Naive thymus-derived CD4-positive, alpha-beta T cell (primary cell): ENCODE measurements at regions of chr9 and their contacts with region 1.

Region 1: GRCh38 chr9:4762108-4762885 is 21.3 kb upstream of the AK3 start:
- DNase-seq: peak; percentile 56 to 83 (median 76)
- ATAC-seq: peak; percentile 79
- H3K4me3 ChIP-seq: no peak overlapping the region
- H3K4me3 Mint-ChIP-seq: peak overlapping the region; percentile 39 to 79 (median 64)
- H3K27ac ChIP-seq: no peak overlapping the region
- H3K27ac Mint-ChIP-seq: peak overlapping the region in 5 of 9 donors; percentile 29 to 83 (median 51)
- H3K4me1 ChIP-seq: peaks cover 0 to 3% of the 10 kb centered on the region in 2 donors
- H3K4me1 Mint-ChIP-seq: peaks cover 0 to 20% (median 10%) of the 10 kb centered on the region in 7 donors
- H3K27me3 ChIP-seq: no peaks in the 10 kb centered on the region
- H3K27me3 Mint-ChIP-seq: peaks cover 0 to 11% (median 7%) of the 10 kb centered on the region in 5 donors

Region 2: DNA sequence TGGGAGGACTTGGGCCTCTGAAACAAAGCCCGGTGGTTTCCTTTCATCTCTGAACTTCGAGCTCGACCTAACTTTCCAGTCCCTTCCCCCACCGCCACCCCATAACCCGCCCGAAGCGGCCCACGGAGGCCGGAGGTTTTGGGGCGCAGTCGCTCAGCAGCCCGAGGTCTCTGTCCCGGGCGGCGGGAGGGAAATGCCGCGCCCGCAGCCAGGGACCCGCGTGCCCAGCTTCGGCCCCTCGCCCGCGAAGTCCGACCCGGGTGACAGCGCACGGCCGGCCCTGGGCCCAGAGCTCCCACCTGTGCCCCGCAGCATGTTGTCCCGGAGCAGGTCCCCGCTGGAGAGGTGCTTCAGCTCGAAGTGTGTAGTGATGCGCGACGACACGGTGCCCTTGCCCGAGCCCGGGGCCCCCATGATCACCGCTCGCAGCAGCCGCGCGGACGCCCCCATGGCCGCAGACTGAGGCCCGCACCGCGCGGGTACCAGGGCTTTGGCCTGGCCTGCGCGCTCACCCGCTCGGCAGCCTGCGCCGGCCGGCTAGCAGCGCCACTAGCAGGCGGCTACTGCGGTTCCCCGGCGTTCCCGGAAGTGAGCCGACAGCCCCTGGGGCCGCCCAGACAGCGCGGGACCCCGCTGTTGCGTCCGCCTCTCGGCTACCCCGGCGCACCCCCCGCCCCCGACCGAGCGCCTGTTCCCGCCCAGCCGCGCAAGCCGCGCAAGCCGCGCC is 21.5 kb before region 1 on chr9 and contains the start of gene AK3:
- CTCF ChIA-PET with region 1: interaction called, 5 read pairs
- POLR2A ChIA-PET with region 1: interaction called, 3 read pairs
- intact Hi-C with region 1: loop called in 1 of 2 experiments (anchors 2 kb)
- DNase-seq: peak; percentile 72 to 85 (median 83)
- ATAC-seq: peak; percentile 95
- H3K4me3 ChIP-seq: peak within 1 kb of the TSS; percentile 73
- H3K4me3 Mint-ChIP-seq: peak within 1 kb of the TSS; percentile 88 to 99 (median 94)
- H3K27ac ChIP-seq: peak within 1 kb of the TSS; percentile 86
- H3K27ac Mint-ChIP-seq: peak within 1 kb of the TSS; percentile 86 to 98 (median 93)
- H3K4me1 ChIP-seq: peaks cover 10 to 16% of the 10 kb centered on the region in 2 donors
- H3K4me1 Mint-ChIP-seq: peaks cover 22 to 49% (median 40%) of the 10 kb centered on the region in 7 donors
- H3K27me3 ChIP-seq: no peaks in the 10 kb centered on the region
- H3K27me3 Mint-ChIP-seq: no peaks in the 10 kb centered on the region
- total RNA-seq, gene AK3: 18.0 to 34.8 (median 25.8) TPM

Region 3: GRCh38 chr9:4862506-4863250 is 100.4 kb after region 1 on chr9:
- CTCF ChIA-PET with region 1: no interaction called
- POLR2A ChIA-PET with region 1: no interaction called
- intact Hi-C with region 1: loop called in 1 of 2 experiments (anchors 1 kb)
- DNase-seq: no peak
- ATAC-seq: no peak
- H3K4me3 ChIP-seq: no peak overlapping the region
- H3K4me3 Mint-ChIP-seq: no peak overlapping the region
- H3K27ac ChIP-seq: no peak overlapping the region
- H3K27ac Mint-ChIP-seq: no peak overlapping the region
- H3K4me1 ChIP-seq: no peaks in the 10 kb centered on the region
- H3K4me1 Mint-ChIP-seq: peaks cover 0 to 33% (median 2%) of the 10 kb centered on the region in 7 donors
- H3K27me3 ChIP-seq: no peaks in the 10 kb centered on the region
- H3K27me3 Mint-ChIP-seq: no peaks in the 10 kb centered on the region

Region 4: GRCh38 chr9:5052838-5053237 is 290.5 kb after region 1 on chr9:
- CTCF ChIA-PET with region 1: no interaction called
- POLR2A ChIA-PET with region 1: no interaction called
- intact Hi-C with region 1: loop called in 1 of 2 experiments (anchors 10 kb)
- DNase-seq: no peak
- ATAC-seq: no peak
- H3K4me3 ChIP-seq: no peak overlapping the region
- H3K4me3 Mint-ChIP-seq: no peak overlapping the region
- H3K27ac ChIP-seq: no peak overlapping the region
- H3K27ac Mint-ChIP-seq: no peak overlapping the region
- H3K4me1 ChIP-seq: no peaks in the 10 kb centered on the region
- H3K4me1 Mint-ChIP-seq: peaks cover 0 to 28% (median 0%) of the 10 kb centered on the region in 7 donors
- H3K27me3 ChIP-seq: no peaks in the 10 kb centered on the region
- H3K27me3 Mint-ChIP-seq: no peaks in the 10 kb centered on the region

Region 5: DNA sequence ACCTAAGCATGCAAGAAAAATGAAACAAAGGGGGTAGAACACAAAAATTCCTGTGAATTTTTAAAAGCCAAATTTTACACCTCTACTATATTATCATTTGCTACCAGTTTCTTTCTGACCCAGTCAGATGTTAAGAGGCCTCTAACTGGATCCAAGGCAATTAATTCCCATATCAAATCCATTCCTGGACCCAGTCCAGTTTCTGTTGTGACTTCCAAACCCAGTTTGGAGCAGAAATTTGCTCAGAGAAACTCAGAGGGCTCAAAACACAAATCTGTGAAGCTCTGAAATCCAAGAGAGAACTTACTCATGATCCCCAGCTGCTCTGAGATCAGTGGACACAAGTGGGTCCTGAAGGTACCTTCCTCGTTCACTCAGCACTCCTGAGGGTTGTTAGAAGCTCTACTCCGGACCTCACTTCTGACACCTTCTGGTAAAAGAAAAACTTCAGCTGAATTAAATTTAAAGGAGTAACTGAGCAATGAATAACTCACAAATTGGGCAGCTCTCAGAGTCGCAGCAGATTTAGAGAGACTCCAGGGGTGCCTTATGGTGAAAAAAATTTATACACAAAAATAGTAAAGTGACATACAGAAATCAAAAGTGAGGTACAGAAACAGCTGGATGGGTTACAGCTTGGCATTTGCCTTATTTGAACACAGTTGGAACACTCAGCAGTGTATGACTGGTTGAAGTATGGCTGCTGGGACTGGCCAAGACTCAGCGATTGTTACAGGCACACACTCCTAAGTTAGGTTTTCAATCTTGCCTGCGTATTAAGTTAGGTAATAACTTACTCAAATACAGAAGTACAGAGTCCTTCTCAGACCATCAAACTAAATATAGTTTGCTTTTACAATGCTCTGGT is 501.3 kb after region 1 on chr9:
- CTCF ChIA-PET with region 1: no interaction called
- POLR2A ChIA-PET with region 1: no interaction called
- intact Hi-C with region 1: loop called (anchors 1 to 10 kb)
- DNase-seq: peak in 5 of 9 donors; percentile 1 to 23 (median 4)
- ATAC-seq: no peak
- H3K4me3 ChIP-seq: no peak overlapping the region
- H3K4me3 Mint-ChIP-seq: peak overlapping the region in 6 of 10 donors; percentile 23 to 36 (median 30)
- H3K27ac ChIP-seq: no peak overlapping the region
- H3K27ac Mint-ChIP-seq: peak overlapping the region in 2 of 9 donors; percentile 0 to 19
- H3K4me1 ChIP-seq: no peaks in the 10 kb centered on the region
- H3K4me1 Mint-ChIP-seq: peaks cover 9 to 24% (median 17%) of the 10 kb centered on the region in 7 donors
- H3K27me3 ChIP-seq: no peaks in the 10 kb centered on the region
- H3K27me3 Mint-ChIP-seq: no peaks in the 10 kb centered on the region